Activated CD4-positive, alpha-beta memory T cell treated with anti-CD3 and anti-CD28 coated beads, Interleukin-2, amount 10 ng/mL, durations not matched to agents 7 days and 5 days (primary cell): ENCODE measurements at regions of chr4 and their contacts with region 1.

Region 1: GRCh38 chr4:129093191-129093920 is at the start of gene SCLT1:
- DNase-seq: peak; percentile 98
- H3K4me3 Mint-ChIP-seq: no peak within 1 kb of the TSS
- H3K27ac Mint-ChIP-seq: no peak within 1 kb of the TSS
- H3K4me1 Mint-ChIP-seq: peaks cover 52% of the 10 kb centered on the region
- H3K27me3 Mint-ChIP-seq: no peaks in the 10 kb centered on the region
- total RNA-seq, gene SCLT1: 36.4 to 37.8 TPM

Region 2: DNA sequence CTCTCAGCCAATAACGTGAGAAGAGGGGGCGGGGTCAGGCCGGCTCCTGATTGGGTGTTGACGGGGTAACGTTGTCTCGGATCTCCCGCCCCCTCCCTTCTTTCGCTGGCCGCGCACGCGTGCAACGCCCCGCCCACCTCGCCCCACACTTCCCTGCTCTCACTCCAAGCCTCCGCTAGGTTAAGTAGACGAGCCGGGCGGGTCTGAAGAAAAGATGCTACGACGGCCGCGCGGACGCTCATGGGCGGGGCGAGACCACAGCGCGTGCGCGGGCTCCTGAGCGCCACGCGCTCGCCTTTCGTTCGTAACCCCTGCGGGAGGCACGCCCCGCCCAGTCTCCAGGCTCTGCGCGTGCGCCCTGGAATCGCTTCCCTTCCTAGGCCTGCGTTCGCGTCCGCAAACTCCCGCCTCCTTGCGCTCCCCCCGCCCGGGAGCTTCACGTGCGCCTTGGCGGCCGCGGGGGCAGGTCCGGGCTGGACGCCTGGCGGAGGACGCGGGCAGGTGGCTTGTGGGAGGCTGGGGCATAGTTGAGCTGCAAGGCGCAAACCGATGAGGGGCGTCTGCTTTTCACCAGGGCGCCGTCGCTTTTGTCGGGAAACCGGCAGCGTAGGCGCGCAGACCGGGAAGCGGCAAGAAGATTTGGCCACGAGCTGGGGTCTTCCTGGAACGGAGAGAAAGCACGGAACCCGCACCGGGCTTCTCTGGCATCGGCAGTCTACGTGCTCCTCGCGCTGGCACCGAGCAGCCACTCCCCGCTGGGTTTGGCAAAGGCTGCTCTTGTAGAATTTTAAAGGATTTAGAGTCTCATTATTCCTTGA is 805.3 kb before region 1 on chr4:
- CTCF ChIA-PET with region 1: no interaction called
- POLR2A ChIA-PET with region 1: interaction called, 14 read pairs
- DNase-seq: peak; percentile 99
- H3K4me3 Mint-ChIP-seq: peak overlapping the region; percentile 96
- H3K27ac Mint-ChIP-seq: peak overlapping the region; percentile 74
- H3K4me1 Mint-ChIP-seq: peaks cover 31% of the 10 kb centered on the region
- H3K27me3 Mint-ChIP-seq: peaks cover 2% of the 10 kb centered on the region

Region 3: DNA sequence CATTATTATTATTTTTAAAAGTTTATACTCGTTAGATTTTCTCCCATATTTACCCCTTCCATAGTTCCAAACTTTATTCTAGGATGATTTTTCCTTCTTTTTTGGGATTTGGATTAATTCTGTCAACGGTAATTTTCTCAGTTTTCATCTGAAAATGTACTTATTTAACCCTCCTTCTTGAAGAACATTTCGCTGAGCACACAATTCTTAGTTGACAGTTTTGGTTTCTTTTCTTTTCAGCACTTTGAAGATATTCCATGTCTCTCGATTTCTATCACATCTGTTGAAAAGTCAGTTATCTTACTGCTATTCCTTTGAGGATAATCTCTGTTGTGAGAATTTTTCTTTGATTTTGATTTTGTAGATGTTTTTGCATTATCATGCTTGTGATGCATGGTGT is 85.3 kb before region 1 on chr4:
- CTCF ChIA-PET with region 1: no interaction called
- POLR2A ChIA-PET with region 1: no interaction called
- DNase-seq: no peak
- H3K4me3 Mint-ChIP-seq: no peak overlapping the region
- H3K27ac Mint-ChIP-seq: no peak overlapping the region
- H3K4me1 Mint-ChIP-seq: no peaks in the 10 kb centered on the region
- H3K27me3 Mint-ChIP-seq: no peaks in the 10 kb centered on the region

Region 4: GRCh38 chr4:129077326-129077725 is 16.0 kb before region 1 on chr4:
- CTCF ChIA-PET with region 1: interaction called, 5 read pairs
- POLR2A ChIA-PET with region 1: interaction called, 21 read pairs
- DNase-seq: no peak
- H3K4me3 Mint-ChIP-seq: no peak overlapping the region
- H3K27ac Mint-ChIP-seq: no peak overlapping the region
- H3K4me1 Mint-ChIP-seq: peaks cover 2% of the 10 kb centered on the region
- H3K27me3 Mint-ChIP-seq: no peaks in the 10 kb centered on the region